Activated naive CD4-positive, alpha-beta T cell treated with anti-CD3 and anti-CD28 coated beads for 36 hours (primary cell): ENCODE measurements at regions of chr16 and their contacts with region 1.

Region 1: DNA sequence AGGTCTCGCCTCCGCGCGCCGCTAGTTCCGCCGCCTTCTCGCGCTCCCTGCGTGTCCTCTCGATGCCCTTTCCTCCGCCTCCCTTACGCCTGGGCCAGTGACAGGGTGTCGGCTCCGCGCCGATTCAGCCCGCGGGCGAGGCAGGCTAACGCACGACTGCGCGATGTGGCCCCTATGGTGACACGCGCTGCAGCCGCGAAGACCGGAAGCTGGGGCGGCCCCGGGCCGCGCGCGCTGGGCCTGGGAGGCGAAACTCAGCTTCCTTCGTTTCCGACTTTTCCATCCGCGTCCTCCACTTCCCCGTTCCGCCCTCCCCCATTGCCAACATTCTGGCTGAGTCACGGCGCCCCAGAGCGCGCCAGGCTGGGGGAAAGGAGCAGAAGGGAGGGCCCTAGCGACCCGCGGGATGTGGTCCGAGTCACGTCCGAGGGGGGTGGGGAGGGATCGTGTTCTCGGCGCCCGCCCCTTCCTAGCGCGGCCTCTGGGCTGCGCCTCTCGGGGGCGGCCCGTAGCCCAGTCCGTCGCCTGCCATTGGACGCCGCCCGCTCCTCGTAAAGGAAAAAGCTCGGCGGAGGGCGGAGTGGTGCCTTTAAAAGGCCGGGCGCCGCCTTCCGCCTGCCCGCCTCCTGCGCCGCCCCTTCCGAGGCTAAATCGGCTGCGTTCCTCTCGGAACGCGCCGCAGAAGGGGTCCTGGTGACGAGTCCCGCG is at the start of gene ALDOA:
- DNase-seq: peak; percentile 97
- H3K4me3 Mint-ChIP-seq: peak within 1 kb of the TSS; percentile 95
- H3K27ac Mint-ChIP-seq: peak within 1 kb of the TSS; percentile 98
- H3K4me1 Mint-ChIP-seq: peaks cover 32% of the 10 kb centered on the region
- H3K27me3 Mint-ChIP-seq: no peaks in the 10 kb centered on the region
- total RNA-seq, gene ALDOA: 1,750 to 1,795 TPM

Region 2: DNA sequence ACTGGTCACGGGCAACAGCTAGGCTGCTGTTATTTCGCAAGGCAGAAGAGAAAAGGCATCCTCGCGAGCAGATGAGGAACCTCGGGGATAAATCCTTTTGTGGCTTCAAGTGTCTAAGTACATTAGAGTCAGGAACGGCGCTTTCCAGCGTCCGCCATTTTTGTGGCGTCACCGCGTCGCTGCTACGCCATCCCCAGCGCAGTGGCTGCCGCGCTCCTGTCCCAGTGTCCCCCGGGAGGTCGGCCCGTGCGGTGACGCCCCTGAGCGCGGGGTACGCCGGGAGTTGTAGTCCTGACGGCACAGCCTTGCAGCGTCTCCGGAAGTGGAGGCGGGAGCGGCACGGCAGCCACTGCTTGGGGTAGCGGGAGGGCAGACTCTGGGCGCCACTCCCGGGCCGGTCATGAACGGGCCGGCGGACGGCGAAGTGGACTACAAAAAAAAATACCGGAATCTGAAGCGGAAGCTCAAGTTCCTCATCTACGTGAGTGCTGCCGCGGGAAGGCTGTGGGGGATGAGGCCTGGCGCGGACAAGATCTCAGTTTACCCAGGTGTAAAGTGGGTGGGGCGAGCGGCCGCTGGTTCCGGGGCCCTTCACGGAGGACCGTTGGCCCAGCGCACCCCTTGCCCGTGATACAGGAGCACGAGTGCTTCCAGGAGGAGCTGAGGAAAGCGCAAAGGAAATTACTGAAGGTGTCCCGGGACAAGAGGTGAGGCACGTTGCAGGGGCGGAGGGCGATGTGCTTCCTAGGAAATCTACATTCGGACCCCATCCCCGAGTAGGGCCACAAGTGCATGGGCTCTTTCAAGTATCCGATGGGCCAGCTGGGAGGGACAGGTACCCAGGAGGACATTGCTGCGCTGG is 69.2 kb before region 1 on chr16 and contains the start of gene INO80E:
- CTCF ChIA-PET with region 1: no interaction called
- intact Hi-C with region 1: loop called (anchors 1 kb)
- DNase-seq: peak; percentile 100
- H3K4me3 Mint-ChIP-seq: peak within 1 kb of the TSS; percentile 98
- H3K27ac Mint-ChIP-seq: peak within 1 kb of the TSS; percentile 98
- H3K4me1 Mint-ChIP-seq: peaks cover 32% of the 10 kb centered on the region
- H3K27me3 Mint-ChIP-seq: no peaks in the 10 kb centered on the region
- total RNA-seq, gene INO80E: 62.0 to 65.4 TPM

Region 3: GRCh38 chr16:30075507-30076275 is 10.4 kb after region 1 on chr16 and contains the start of gene PPP4C:
- CTCF ChIA-PET with region 1: interaction called, 8 read pairs
- intact Hi-C with region 1: loop called (anchors 1 kb)
- DNase-seq: peak; percentile 93
- H3K4me3 Mint-ChIP-seq: peak within 1 kb of the TSS; percentile 92
- H3K27ac Mint-ChIP-seq: peak within 1 kb of the TSS; percentile 94
- H3K4me1 Mint-ChIP-seq: peaks cover 33% of the 10 kb centered on the region
- H3K27me3 Mint-ChIP-seq: no peaks in the 10 kb centered on the region
- total RNA-seq, gene PPP4C: 104 to 105 TPM

Region 4: DNA sequence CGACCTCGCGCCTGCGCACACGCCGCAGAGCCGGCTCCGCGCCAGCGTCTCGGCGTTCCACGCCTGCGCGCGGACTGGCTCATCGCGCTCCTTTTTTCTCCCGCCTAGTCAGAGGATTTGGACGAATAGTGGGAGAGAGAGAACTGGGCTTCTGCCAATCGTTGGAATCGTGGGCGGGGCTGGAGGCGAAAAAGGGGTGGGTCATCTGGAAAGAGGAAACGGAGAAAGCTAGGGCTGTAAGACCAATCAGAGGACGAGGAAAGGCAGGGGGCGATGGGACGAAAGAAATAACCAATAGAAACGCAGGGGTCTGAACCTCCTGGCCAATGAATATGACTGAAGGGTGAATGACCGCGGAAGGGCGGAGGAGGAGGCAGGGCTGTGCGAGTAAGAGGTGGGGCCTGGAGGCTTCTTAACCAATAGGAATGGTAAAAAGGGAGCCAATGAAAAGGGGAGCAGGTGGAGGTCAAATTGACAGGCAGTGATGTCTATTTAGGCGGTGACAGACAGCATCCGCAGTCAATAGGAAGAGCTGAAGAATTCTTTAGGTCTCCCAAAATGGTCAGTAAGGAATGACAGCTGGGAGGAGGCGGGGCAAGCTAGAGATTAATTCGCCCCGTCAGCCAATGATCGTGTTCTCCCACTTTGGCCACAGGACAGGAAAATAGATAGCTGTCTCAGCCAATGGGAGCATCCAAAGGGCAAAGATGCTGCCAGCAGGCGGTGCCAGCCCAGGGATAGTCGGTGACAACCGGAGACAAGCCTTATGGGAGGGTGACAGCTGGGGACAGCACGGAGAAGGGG is 305.3 kb after region 1 on chr16 and contains the start of gene TBC1D10B:
- CTCF ChIA-PET with region 1: no interaction called
- intact Hi-C with region 1: loop called (anchors 2 kb)
- DNase-seq: peak; percentile 100
- H3K4me3 Mint-ChIP-seq: peak within 1 kb of the TSS; percentile 94
- H3K27ac Mint-ChIP-seq: peak within 1 kb of the TSS; percentile 98
- H3K4me1 Mint-ChIP-seq: peaks cover 40% of the 10 kb centered on the region
- H3K27me3 Mint-ChIP-seq: no peaks in the 10 kb centered on the region
- total RNA-seq, gene TBC1D10B: 36.6 to 38.4 TPM

Region 5: DNA sequence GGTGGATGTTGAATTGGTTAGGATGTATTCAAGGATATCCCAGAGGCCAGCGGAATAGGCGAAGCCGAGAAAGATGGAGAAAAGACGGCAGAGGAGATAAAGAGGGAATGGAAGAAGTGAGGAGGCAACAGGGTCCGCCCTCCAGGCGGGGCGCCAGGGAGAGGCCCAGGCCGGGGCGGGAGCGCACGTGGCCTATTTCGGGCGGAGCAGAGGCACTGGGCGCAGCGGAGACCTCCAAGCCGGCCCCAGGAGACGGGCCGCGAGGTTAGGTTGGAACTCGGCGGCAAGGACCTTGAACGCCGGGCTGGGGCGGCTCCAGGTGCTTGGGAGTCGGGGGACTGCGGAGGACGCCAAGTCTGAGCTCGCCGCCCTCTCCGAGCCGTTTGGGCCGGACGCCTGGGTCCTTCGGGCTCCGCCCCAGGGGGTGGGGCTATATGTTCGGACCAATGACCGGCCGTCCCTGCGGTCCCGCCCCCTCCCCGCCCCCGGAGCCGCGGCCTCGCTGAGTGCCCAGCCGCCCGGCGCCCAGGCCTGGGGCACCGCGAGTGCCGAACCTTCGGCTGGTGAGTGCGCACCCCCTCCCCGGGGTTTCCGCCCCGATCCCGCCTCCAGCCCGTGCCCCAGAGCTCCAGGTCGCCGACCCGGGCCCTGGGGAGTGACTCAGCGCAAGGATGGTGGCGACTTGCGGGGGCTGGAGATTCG is 342.0 kb after region 1 on chr16 and contains the start of gene ZNF771:
- CTCF ChIA-PET with region 1: no interaction called
- intact Hi-C with region 1: loop called (anchors 1 kb)
- DNase-seq: peak; percentile 91
- H3K4me3 Mint-ChIP-seq: peak within 1 kb of the TSS; percentile 98
- H3K27ac Mint-ChIP-seq: peak within 1 kb of the TSS; percentile 93
- H3K4me1 Mint-ChIP-seq: peaks cover 32% of the 10 kb centered on the region
- H3K27me3 Mint-ChIP-seq: no peaks in the 10 kb centered on the region
- total RNA-seq, gene ZNF771: 3.4 to 4.7 TPM